PC-9 (cell line): ENCODE measurements at regions of chr5 and their contacts with region 1.

Region 1: DNA sequence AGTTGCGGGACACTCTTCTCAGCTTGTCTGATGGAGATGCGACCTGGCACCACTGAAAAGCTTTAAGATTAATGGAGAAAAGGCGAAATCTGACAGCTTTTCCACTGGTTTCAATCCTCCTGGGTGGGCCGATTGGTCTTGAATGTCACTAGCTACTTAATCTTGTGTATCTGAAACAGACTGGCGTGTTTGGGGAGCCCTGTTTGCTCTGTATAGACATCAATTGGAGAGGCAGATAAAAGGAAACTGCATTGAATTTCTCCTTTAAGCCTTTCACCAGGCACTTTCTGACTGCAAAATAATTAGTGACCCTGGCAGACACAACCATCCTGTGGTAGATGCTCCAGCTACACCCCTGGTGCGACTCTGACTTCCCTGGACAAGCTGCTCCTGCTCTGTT is 224.2 kb downstream of the NDUFS4 start:
- DNase-seq: no peak
- H3K4me3 ChIP-seq: no peak overlapping the region
- H3K27ac ChIP-seq: no peak overlapping the region
- H3K4me1 ChIP-seq: no peaks in the 10 kb centered on the region
- H3K27me3 ChIP-seq: no peaks in the 10 kb centered on the region
- CTCF ChIP-seq: no peak

Region 2: GRCh38 chr5:53681079-53681478 is 103.5 kb before region 1 on chr5:
- CTCF ChIA-PET with region 1: interaction called, 14 read pairs
- POLR2A ChIA-PET with region 1: no interaction called
- intact Hi-C with region 1: no loop called
- DNase-seq: no peak
- H3K4me3 ChIP-seq: no peak overlapping the region
- H3K27ac ChIP-seq: no peak overlapping the region
- H3K4me1 ChIP-seq: no peaks in the 10 kb centered on the region
- H3K27me3 ChIP-seq: no peaks in the 10 kb centered on the region
- CTCF ChIP-seq: no peak

Region 3: GRCh38 chr5:53730943-53731342 is 53.7 kb before region 1 on chr5:
- CTCF ChIA-PET with region 1: no interaction called
- POLR2A ChIA-PET with region 1: no interaction called
- intact Hi-C with region 1: no loop called
- DNase-seq: no peak
- H3K4me3 ChIP-seq: no peak overlapping the region
- H3K27ac ChIP-seq: no peak overlapping the region
- H3K4me1 ChIP-seq: no peaks in the 10 kb centered on the region
- H3K27me3 ChIP-seq: no peaks in the 10 kb centered on the region
- CTCF ChIP-seq: no peak

Region 4: GRCh38 chr5:53820119-53820801 is 35.7 kb after region 1 on chr5:
- CTCF ChIA-PET with region 1: no interaction called
- POLR2A ChIA-PET with region 1: no interaction called
- intact Hi-C with region 1: no loop called
- DNase-seq: no peak
- H3K4me3 ChIP-seq: no peak overlapping the region
- H3K27ac ChIP-seq: no peak overlapping the region
- H3K4me1 ChIP-seq: no peaks in the 10 kb centered on the region
- H3K27me3 ChIP-seq: no peaks in the 10 kb centered on the region
- CTCF ChIP-seq: no peak